ENCODE measurements at regions of chr17 and their contacts with region 1.

Region 1: DNA sequence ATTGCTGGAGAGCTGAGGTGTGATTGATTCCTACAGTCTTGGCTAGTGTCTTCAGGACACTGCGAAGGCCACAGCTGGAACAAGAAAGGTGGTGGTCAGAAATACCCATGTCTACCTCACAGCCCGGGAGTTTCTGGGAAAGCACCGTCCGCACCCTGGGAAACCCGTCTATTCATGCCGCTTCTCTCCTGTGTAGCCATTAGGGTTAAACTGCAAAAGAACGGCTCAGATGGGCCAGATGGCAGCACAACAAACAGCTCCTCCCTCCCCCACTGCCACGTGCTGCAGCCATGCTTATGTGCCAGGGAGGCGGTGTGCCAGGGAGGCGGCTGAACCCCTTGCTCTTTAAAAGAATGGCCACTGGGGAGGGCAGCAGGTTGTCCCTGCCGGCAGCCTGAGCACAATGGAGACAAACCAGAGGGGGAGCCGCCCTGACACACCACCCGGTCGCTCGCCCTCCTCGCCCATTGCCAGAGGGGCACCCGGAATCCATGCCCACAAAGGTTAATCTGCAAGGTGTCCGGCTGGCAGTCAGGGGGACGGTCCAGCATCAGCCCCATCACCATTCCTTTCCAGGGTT is 65.2 kb downstream of the CYTH1 start:
- DNase-seq: peak; percentile 72 to 73
- ATAC-seq: peak; percentile 82 to 95 (median 89)
- H3K4me3 ChIP-seq: peak overlapping the region; percentile 15 to 64 (median 53)
- H3K27ac ChIP-seq: peak overlapping the region in 9 of 10 donors; percentile 22 to 78 (median 63)
- H3K4me1 ChIP-seq: peaks cover 6 to 96% (median 59%) of the 10 kb centered on the region in 9 donors
- H3K27me3 ChIP-seq: no peaks in the 10 kb centered on the region
- CTCF ChIP-seq: peak in 3 of 9 donors; percentile 13 to 28 (median 14)

Region 2: DNA sequence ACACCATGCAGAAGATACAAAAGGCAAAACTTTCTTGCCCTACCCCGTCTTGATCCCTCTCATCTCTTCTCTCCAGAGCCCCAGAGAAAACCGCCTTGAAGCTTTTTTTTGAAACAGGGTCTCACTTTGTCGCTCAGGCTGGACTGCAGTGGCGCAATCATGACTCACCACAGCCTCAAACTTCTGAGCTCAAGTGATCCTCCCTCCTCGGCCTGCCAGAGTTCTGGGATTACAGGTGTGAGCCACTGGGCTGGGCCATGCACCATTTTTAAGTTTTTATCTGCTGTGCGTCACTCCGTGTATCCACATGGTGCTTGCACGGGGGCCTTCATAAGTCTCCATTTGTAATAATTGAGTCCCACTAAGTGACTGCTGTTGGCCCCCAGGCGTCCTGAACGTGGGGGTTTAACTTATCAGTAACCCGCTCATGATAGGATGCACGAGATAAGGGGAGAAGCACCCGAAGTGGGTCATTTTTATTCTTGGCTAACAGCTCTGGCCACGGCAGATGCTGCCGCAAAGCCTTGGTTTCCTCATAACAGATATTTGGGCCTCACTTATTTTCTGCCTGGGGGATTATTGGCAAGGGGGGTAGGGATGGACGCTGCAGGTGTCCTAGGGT is 148.3 kb before region 1 on chr17:
- intact Hi-C with region 1: no loop called
- DNase-seq: no peak
- ATAC-seq: no peak
- H3K4me3 ChIP-seq: no peak overlapping the region
- H3K27ac ChIP-seq: no peak overlapping the region
- H3K4me1 ChIP-seq: peaks cover 0 to 8% (median 0%) of the 10 kb centered on the region in 9 donors
- H3K27me3 ChIP-seq: peaks cover 0 to 10% (median under 1%) of the 10 kb centered on the region in 7 donors
- CTCF ChIP-seq: no peak

Region 3: DNA sequence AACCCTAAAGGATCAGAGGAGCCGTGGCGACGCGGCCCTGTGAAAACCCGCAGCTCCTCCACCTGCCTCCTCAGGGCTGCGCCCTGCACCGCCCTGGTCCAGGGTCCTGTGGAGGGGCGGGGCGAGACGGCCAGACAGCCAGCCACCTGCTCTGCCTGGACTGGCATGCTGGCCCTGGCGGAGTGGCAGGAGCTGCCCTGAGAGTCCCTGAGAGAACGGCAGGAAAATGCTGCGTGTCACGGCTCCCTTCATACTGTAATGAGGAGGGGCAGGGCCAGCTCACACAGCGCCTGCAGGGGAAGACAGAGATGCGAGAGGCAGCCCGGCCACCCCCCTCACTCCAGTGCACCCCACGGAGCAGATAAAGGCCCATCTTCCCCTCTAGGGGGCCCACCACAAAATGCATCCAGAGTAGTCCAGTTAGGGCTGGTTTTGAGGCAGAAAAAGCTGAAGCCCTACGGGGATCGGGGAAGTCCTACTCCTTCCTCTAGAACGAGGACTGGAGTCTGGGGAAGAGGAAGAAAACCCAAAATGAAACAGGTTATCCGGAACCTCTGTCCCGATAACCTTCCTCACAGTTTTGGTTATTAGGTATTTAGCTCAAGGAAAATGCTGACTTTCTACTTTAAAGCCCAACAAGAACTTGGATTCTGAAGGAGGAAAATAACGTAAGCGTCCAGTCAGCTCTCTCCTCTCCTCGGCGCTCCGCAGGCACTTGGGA is 42.1 kb before region 1 on chr17:
- intact Hi-C with region 1: no loop called
- DNase-seq: no peak
- ATAC-seq: peak in 1 of 8 donors; percentile 9
- H3K4me3 ChIP-seq: no peak overlapping the region
- H3K27ac ChIP-seq: no peak overlapping the region
- H3K4me1 ChIP-seq: peaks cover 0 to 3% (median 0%) of the 10 kb centered on the region in 9 donors
- H3K27me3 ChIP-seq: no peaks in the 10 kb centered on the region
- CTCF ChIP-seq: no peak

Region 4: GRCh38 chr17:78736526-78737079 is 19.7 kb after region 1 on chr17:
- intact Hi-C with region 1: loop called in 1 of 10 experiments (anchors 2 kb)
- DNase-seq: peak; percentile 77 to 79
- ATAC-seq: peak; percentile 81 to 91 (median 88)
- H3K4me3 ChIP-seq: peak overlapping the region; percentile 30 to 64 (median 54)
- H3K27ac ChIP-seq: peak overlapping the region; percentile 64 to 92 (median 83)
- H3K4me1 ChIP-seq: peaks cover 24 to 96% (median 86%) of the 10 kb centered on the region in 9 donors
- H3K27me3 ChIP-seq: no peaks in the 10 kb centered on the region
- CTCF ChIP-seq: peak in 5 of 9 donors; percentile 10 to 25 (median 19)

Region 5: GRCh38 chr17:78745407-78746088 is 28.6 kb after region 1 on chr17:
- intact Hi-C with region 1: loop called in 1 of 10 experiments (anchors 5 kb)
- DNase-seq: peak in 1 of 2 donors; percentile 54
- ATAC-seq: no peak
- H3K4me3 ChIP-seq: no peak overlapping the region
- H3K27ac ChIP-seq: peak overlapping the region in 1 of 10 donors; percentile 87
- H3K4me1 ChIP-seq: peaks cover 10 to 92% (median 60%) of the 10 kb centered on the region in 9 donors
- H3K27me3 ChIP-seq: no peaks in the 10 kb centered on the region
- CTCF ChIP-seq: peak in 8 of 9 donors; percentile 58 to 75 (median 65)

Region 6: DNA sequence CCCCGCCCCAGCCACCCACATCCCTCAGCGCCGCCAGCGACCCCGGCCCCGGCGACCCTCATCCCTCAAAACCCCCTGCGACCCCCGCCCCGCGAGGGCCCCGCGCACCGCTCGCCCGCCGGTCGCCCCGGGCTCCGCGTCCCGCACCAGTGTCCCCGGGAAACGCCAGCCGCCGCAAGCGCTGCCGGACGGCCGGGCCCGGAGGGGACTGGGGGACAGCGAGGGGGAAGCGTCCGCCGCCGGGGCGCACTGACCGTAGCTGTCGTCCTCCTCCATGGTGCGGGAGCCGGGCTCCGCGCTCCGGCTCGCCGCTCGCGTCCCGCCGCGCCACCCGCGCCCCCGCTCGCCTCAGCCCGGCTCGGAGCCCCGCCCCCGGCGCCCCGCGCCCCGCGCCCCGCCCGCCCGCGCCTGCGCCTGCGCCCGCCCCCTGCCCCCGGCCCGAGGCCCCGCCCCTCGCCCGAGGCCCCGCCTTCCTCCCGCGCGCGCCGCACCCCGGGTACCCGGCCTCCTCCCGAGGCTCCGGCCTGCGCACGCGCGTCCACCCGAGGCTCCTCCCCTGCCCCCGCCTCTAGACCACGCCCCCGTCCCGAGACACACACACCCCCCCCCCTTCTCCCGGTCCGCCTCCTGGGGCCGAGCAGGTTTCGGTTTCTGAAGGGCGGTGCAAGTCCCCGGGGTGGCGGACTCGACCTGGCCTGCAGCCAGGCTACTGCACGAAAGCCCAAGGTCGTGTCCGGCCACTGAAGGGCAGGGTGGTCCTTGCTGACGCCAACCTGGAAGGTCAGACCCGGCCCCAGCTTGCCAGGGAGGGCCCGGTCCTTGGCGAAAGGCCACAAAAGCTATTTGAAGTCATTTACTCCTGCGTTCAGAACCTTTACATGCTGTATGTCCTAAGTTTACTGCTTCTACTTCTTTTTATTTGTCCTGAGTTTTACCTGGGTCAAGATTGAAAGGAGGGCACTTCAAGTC is 65.3 kb after region 1 on chr17 and contains the start of gene CYTH1:
- intact Hi-C with region 1: loop called in 3 of 10 experiments (anchors 5 kb)
- DNase-seq: peak; percentile 97 to 98
- ATAC-seq: peak; percentile 94 to 97 (median 96)
- H3K4me3 ChIP-seq: peak within 1 kb of the TSS; percentile 86 to 99 (median 96)
- H3K27ac ChIP-seq: peak within 1 kb of the TSS; percentile 87 to 99 (median 96)
- H3K4me1 ChIP-seq: peaks cover 0 to 54% (median 25%) of the 10 kb centered on the region in 9 donors
- H3K27me3 ChIP-seq: no peaks in the 10 kb centered on the region
- CTCF ChIP-seq: no peak
- total RNA-seq, gene CYTH1: 23.5 to 46.9 (median 34.8) TPM

Region 7: DNA sequence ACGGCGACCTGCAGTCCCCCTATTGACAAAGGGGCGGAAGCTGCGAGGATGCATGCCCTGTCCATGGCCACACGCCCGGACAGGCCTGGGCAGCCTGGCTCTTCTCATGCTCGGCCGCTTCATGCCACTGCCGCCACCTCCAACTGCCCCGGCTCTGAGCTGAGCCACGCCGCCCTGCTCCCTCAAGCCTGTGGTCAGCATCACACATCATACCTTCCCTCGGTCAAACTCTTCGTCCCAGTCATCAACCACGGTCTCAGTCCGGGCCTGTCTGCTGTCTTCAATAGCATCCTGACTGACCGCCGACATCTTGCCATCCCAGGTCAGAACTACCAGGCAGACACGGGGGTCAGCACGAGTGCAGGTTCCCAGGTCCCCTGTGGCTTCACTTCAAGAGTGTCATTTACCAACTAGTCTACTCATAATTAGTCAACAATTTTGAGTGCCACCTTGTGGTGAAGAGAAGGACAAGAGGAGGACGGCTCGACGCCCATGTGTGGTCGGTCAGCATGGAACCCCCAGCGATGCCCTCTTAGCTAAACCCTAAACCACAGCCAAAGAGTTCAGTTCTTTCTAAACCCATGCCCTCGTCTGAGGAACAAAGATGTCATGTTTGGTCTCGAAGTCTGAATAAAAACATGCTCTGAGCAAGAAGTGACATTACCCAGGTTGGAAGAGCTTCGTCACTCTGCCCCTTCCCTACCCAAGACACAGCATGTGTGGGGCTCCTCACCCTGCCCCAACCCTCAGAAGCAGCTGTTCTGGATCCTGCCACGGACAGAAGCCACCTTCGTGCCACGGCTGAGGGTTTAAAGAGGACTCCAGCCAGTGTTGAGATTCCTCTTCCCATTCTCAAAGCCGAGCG is 82.0 kb after region 1 on chr17:
- intact Hi-C with region 1: loop called in 1 of 10 experiments (anchors 5 kb)
- DNase-seq: no peak
- ATAC-seq: peak in 6 of 8 donors; percentile 18 to 44 (median 30)
- H3K4me3 ChIP-seq: no peak overlapping the region
- H3K27ac ChIP-seq: no peak overlapping the region
- H3K4me1 ChIP-seq: peaks cover 3 to 39% (median 26%) of the 10 kb centered on the region in 9 donors
- H3K27me3 ChIP-seq: no peaks in the 10 kb centered on the region
- CTCF ChIP-seq: peak in 8 of 9 donors; percentile 24 to 63 (median 56)